ENCODE measurements at regions of chr1 and their contacts with region 1.

Region 1: GRCh38 chr1:177786176-177786745 is 183.6 kb downstream of the SEC16B start:
- DNase-seq: no peak
- H3K4me3 ChIP-seq: no peak overlapping the region
- H3K27ac ChIP-seq: no peak overlapping the region
- H3K4me1 ChIP-seq: no peaks in the 10 kb centered on the region
- H3K27me3 ChIP-seq: no peaks in the 10 kb centered on the region
- CTCF ChIP-seq: no peak

Region 2: DNA sequence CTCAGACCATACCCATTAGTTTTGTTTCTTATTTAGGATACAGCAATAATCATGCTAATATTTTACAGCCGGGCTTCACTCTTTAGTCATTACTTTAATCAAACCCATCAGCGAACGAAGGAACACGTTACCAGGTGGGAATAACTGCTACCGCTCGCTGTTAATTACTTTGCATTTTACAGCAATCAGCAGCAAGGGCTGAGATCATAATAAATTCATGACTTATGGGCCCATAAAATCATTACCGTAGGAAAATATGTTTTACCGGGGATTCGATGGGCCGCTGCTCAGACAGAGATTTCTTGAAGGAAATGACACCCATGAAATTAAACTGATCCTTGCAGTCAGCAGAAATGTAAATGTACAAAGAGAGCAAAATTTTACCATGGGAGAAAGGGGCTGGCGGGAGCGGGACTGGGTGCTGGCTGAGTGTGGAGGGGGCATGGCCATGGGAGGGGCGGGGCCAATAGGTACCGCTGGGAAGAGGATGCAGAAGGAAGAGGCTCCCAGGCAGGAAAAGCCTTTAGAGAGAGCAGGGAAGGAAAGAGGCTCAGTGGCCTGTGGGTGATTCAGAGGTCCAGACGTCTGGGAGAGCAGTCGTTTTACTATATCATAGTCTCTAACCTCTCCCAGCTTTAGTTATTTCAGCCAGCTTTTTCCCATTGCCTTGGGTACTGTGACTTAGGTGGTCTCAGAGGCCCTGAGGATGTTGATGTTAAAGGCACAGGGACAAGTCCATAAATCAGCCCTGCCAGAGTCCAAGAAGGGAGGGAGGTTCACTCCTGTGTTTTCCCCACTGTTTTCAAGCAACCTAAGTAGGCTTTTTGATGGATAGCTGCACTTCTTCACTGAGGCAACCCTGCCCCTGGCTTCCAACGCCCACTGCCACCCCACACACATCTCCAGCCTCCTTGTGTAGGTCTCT is 75.3 kb before region 1 on chr1:
- CTCF ChIA-PET with region 1: no interaction called
- dilution Hi-C with region 1: no loop called
- in situ Hi-C with region 1: no loop called
- intact Hi-C with region 1: no loop called
- DNase-seq: no peak
- H3K4me3 ChIP-seq: no peak overlapping the region
- H3K27ac ChIP-seq: no peak overlapping the region
- H3K4me1 ChIP-seq: peaks cover under 1% of the 10 kb centered on the region
- H3K27me3 ChIP-seq: peaks cover 3% of the 10 kb centered on the region
- CTCF ChIP-seq: no peak

Region 3: GRCh38 chr1:177741476-177741875 is 44.8 kb before region 1 on chr1:
- CTCF ChIA-PET with region 1: no interaction called
- dilution Hi-C with region 1: no loop called
- in situ Hi-C with region 1: no loop called
- intact Hi-C with region 1: no loop called
- DNase-seq: no peak
- H3K4me3 ChIP-seq: no peak overlapping the region
- H3K27ac ChIP-seq: no peak overlapping the region
- H3K4me1 ChIP-seq: no peaks in the 10 kb centered on the region
- H3K27me3 ChIP-seq: no peaks in the 10 kb centered on the region
- CTCF ChIP-seq: no peak

Region 4: DNA sequence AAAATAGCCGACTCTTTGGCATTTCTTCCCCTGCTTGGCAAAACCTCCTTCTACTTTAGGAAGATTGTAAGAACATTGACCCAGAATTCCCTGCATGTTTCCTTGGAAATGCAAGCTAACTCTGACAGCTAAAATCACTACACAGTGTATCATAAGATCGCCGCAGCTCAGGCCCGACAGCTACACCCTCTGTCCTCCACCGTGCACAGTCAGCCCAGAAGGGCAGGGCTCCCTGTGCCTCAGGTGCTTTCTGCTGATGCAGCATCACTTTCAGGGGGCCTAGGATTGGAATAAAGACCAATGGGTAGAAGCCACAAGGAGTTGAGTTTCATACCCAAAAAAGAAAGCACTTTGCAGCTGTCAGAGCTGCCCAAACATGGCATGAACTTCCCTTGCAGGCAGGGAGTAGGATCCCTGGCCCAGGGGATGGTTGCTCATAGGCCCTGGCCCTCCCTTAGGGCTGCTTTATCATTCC is 38.3 kb after region 1 on chr1:
- CTCF ChIA-PET with region 1: no interaction called
- dilution Hi-C with region 1: loop called (anchors 5 kb)
- in situ Hi-C with region 1: no loop called
- intact Hi-C with region 1: no loop called
- DNase-seq: no peak
- H3K4me3 ChIP-seq: no peak overlapping the region
- H3K27ac ChIP-seq: no peak overlapping the region
- H3K4me1 ChIP-seq: no peaks in the 10 kb centered on the region
- H3K27me3 ChIP-seq: no peaks in the 10 kb centered on the region
- CTCF ChIP-seq: no peak

Region 5: DNA sequence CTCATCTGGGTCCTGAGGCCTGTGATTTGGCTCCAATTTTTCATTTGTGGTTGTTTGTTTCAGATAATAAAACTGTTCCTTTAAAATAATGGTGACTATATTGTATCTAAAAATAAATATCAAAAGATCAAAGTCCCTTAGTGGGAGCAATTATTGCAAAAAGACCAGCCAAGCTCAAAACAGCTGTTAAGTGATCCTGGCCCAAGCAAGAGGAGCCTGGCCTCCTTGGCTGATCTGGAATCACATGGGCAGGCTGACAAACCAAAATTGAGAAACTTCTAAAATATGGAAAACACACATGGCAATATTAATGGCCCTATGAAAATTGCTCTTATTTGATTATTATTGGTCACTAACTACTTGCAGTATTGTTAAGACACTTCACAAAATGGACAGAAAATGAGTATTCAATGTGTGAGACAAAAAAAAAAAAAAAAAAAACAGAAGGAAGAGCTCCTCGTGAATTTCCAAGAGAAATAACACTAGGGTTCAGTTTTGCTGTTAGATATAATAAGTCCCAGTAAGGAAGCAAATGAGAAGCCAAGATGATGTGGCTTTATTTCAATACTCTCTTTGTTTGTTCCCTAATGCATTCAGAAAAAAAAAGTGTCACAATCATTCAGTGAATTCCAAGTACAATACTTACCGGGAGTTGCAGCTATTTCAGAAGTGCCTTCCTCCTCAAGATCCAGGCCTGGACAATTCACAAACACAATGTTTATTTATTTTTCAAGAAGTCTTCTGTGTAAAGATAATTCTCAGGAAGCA is 78.5 kb after region 1 on chr1:
- CTCF ChIA-PET with region 1: no interaction called
- dilution Hi-C with region 1: loop called (anchors 5 kb)
- in situ Hi-C with region 1: no loop called
- intact Hi-C with region 1: no loop called
- DNase-seq: no peak
- H3K4me3 ChIP-seq: no peak overlapping the region
- H3K27ac ChIP-seq: no peak overlapping the region
- H3K4me1 ChIP-seq: peaks cover 5% of the 10 kb centered on the region
- H3K27me3 ChIP-seq: no peaks in the 10 kb centered on the region
- CTCF ChIP-seq: no peak

Measured in mammary epithelial cell (primary cell).